GM12878 (cell line): ENCODE measurements at regions of chr11 and their contacts with region 1.

Region 1: GRCh38 chr11:22192642-22193347 is at the start of gene ANO5:
- DNase-seq: no peak
- ATAC-seq: peak; percentile 75
- H3K4me3 ChIP-seq: peak within 1 kb of the TSS; percentile 60
- H3K27ac ChIP-seq: no peak within 1 kb of the TSS
- H3K4me1 ChIP-seq: no peaks in the 10 kb centered on the region
- H3K27me3 ChIP-seq: no peaks in the 10 kb centered on the region
- CTCF ChIP-seq: no peak
- EP300 ChIP-seq: no peak
- POLR2A ChIP-seq: peak; percentile 48; the same call in 1 of the 2 replicates
- RAD21 ChIP-seq: no peak
- polyA plus RNA-seq, gene ANO5: 1.6 to 3.1 TPM

Region 2: GRCh38 chr11:22138264-22138663 is 54.5 kb before region 1 on chr11:
- CTCF ChIA-PET with region 1: no interaction called
- POLR2A ChIA-PET with region 1: no interaction called
- RAD21 ChIA-PET with region 1: no interaction called
- SMC1A ChIA-PET with region 1: no interaction called
- in situ Hi-C with region 1: no loop called
- intact Hi-C with region 1: no loop called
- DNase-seq: no peak
- ATAC-seq: no peak
- H3K4me3 ChIP-seq: no peak overlapping the region
- H3K27ac ChIP-seq: no peak overlapping the region
- H3K4me1 ChIP-seq: no peaks in the 10 kb centered on the region
- H3K27me3 ChIP-seq: no peaks in the 10 kb centered on the region
- CTCF ChIP-seq: no peak
- EP300 ChIP-seq: no peak
- POLR2A ChIP-seq: no peak
- RAD21 ChIP-seq: no peak

Region 3: GRCh38 chr11:22177186-22177585 is 15.6 kb before region 1 on chr11:
- CTCF ChIA-PET with region 1: interaction called, 3 read pairs
- POLR2A ChIA-PET with region 1: interaction called, 4 read pairs
- RAD21 ChIA-PET with region 1: interaction called, 14 read pairs
- SMC1A ChIA-PET with region 1: interaction called, 10 read pairs
- in situ Hi-C with region 1: no loop called
- intact Hi-C with region 1: no loop called
- DNase-seq: no peak
- ATAC-seq: peak; percentile 79
- H3K4me3 ChIP-seq: no peak overlapping the region
- H3K27ac ChIP-seq: no peak overlapping the region
- H3K4me1 ChIP-seq: no peaks in the 10 kb centered on the region
- H3K27me3 ChIP-seq: no peaks in the 10 kb centered on the region
- CTCF ChIP-seq: peak in 1 of 3 experiments; percentile 21; a peak in 1 of 6 replicates
- EP300 ChIP-seq: no peak
- POLR2A ChIP-seq: no peak
- RAD21 ChIP-seq: peak; percentile 10; the same call in 1 of the 2 replicates

Region 4: DNA sequence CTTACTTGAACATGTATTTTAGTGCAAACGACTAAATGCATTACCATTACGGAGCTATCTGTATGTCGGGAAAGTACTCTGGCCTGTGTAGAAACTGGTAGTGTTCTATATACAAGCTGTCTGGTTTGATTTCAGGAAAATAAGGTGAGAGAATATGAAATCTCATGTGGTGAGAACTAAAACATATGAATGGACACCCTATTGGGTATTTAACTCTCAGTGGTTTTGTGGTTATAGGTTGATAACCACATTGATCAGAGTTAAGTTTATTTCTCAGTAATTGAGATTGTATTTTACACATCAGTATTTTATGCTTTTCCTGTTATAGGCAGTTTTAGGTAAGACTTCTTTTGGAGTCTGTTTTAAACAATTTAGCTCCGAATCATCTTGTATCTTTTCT is 10.5 kb after region 1 on chr11:
- CTCF ChIA-PET with region 1: interaction called, 6 read pairs
- POLR2A ChIA-PET with region 1: interaction called, 3 read pairs
- RAD21 ChIA-PET with region 1: interaction called, 7 read pairs
- SMC1A ChIA-PET with region 1: interaction called, 17 read pairs
- in situ Hi-C with region 1: no loop called
- intact Hi-C with region 1: no loop called
- DNase-seq: no peak
- ATAC-seq: peak; percentile 91
- H3K4me3 ChIP-seq: no peak overlapping the region
- H3K27ac ChIP-seq: no peak overlapping the region
- H3K4me1 ChIP-seq: no peaks in the 10 kb centered on the region
- H3K27me3 ChIP-seq: no peaks in the 10 kb centered on the region
- CTCF ChIP-seq: no peak
- EP300 ChIP-seq: peak in 1 of 2 experiments; percentile 29; a peak in 1 of 4 replicates
- POLR2A ChIP-seq: no peak
- RAD21 ChIP-seq: no peak

Region 5: DNA sequence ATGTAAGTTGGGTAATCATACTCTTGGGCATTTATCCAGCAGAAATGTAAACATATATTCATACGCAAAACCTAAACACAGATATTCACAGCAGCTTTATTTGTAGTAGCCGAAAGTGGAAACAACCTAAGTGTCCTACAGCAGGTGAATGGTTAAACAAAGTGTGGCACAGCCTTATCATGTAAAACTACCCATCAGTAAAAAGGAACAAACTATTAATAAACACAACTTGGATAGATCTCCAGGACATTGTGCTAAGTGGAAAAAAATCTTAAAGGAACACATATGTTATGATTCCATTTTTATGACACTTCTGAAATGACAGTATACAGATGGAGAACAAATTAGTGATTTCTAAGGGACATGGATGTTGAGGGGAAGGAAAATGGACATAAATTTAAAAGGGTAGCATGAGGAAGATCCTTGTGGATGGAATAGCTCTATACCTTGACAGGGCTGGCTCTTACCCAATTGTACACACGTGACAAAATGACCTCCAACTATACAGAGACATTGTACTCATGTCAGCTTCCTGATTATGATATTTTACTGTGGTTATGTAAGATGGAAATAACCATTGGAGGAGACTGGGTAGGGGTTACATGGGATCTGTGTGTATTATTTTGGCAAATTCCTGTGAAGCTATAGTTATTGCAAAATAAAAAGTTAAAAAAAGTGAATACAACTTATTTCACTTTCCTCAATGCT is 15.5 kb after region 1 on chr11:
- CTCF ChIA-PET with region 1: interaction called, 5 read pairs
- POLR2A ChIA-PET with region 1: interaction called, 4 read pairs
- RAD21 ChIA-PET with region 1: interaction called, 7 read pairs
- SMC1A ChIA-PET with region 1: interaction called, 17 read pairs
- in situ Hi-C with region 1: no loop called
- intact Hi-C with region 1: no loop called
- DNase-seq: no peak
- ATAC-seq: no peak; the same call in 2 of the 3 replicates
- H3K4me3 ChIP-seq: no peak overlapping the region
- H3K27ac ChIP-seq: no peak overlapping the region
- H3K4me1 ChIP-seq: no peaks in the 10 kb centered on the region
- H3K27me3 ChIP-seq: no peaks in the 10 kb centered on the region
- CTCF ChIP-seq: no peak
- EP300 ChIP-seq: no peak
- POLR2A ChIP-seq: no peak
- RAD21 ChIP-seq: no peak

Region 6: GRCh38 chr11:22763166-22763565 is 570.4 kb after region 1 on chr11:
- CTCF ChIA-PET with region 1: no interaction called
- POLR2A ChIA-PET with region 1: no interaction called
- RAD21 ChIA-PET with region 1: no interaction called
- SMC1A ChIA-PET with region 1: no interaction called
- in situ Hi-C with region 1: no loop called
- intact Hi-C with region 1: no loop called
- DNase-seq: no peak
- ATAC-seq: no peak
- H3K4me3 ChIP-seq: no peak overlapping the region
- H3K27ac ChIP-seq: no peak overlapping the region
- H3K4me1 ChIP-seq: 0 out of 2 replicates have a peak, but pooled peaks cover 4% of the 10 kb centered on the region
- H3K27me3 ChIP-seq: no peaks in the 10 kb centered on the region
- CTCF ChIP-seq: no peak
- EP300 ChIP-seq: no peak
- POLR2A ChIP-seq: no peak
- RAD21 ChIP-seq: no peak